Tibial artery (tissue), 4 donors: ENCODE measurements at regions of chr2 and their contacts with region 1.

Region 1: GRCh38 chr2:158006961-158007719 is 94.5 kb upstream of the UPP2 start:
- DNase-seq: no peak
- H3K4me3 ChIP-seq: no peak overlapping the region
- H3K27ac ChIP-seq: no peak overlapping the region
- H3K4me1 ChIP-seq: peaks cover 0 to 14% (median 3%) of the 10 kb centered on the region in 4 donors
- H3K27me3 ChIP-seq: no peaks in the 10 kb centered on the region
- CTCF ChIP-seq: no peak

Region 2: DNA sequence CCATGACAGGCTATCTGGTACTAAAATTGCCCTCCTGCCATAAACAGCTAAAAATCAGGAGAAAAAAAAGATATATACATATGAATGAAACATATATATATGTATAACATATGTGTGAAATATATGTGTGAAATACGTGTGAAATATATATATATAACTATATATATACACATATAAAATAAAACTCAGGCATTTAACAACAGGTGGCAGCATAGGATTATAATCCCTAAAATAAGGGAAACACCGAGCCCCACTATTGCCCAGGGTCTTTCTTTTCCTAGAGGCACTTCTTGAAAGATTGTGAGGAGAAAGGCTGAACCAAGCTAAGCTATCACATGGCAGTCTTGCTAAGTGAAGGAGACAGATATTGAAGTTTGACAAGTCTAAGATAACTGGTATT is 497.4 kb before region 1 on chr2:
- intact Hi-C with region 1: loop called (anchors 10 kb)
- DNase-seq: no peak
- H3K4me3 ChIP-seq: no peak overlapping the region
- H3K27ac ChIP-seq: no peak overlapping the region
- H3K4me1 ChIP-seq: no peaks in the 10 kb centered on the region
- H3K27me3 ChIP-seq: no peaks in the 10 kb centered on the region
- CTCF ChIP-seq: no peak

Region 3: GRCh38 chr2:157628477-157629415 is 378.4 kb before region 1 on chr2 and contains the start of gene ACVR1C:
- intact Hi-C with region 1: loop called (anchors 10 kb)
- DNase-seq: peak; percentile 31 to 70
- H3K4me3 ChIP-seq: peak within 1 kb of the TSS; percentile 55 to 64
- H3K27ac ChIP-seq: peak within 1 kb of the TSS in 1 of 2 donors; percentile 2
- H3K4me1 ChIP-seq: peaks cover 0 to 17% (median 10%) of the 10 kb centered on the region in 4 donors
- H3K27me3 ChIP-seq: peaks cover 0 to 6% of the 10 kb centered on the region in 2 donors
- CTCF ChIP-seq: peak; percentile 15 to 32

Region 4: DNA sequence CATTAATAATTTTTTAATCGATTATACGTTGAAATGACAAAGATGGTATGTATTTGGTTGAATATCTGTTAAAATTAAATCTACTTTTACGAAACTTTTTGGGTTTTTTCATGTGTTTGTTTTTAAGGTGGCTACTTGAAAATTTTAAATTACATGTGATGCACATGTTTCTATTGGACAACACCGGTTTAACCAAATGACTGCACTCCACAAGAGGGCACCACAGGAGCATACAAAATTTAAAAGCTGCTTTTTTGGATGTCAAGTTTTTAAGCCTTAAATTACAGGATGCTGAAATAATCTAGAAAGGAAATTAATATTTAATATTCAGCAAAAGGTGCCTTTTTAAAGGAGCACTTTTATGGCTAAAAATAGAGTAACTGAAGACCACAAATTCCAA is 229.7 kb before region 1 on chr2:
- intact Hi-C with region 1: loop called (anchors 5 kb)
- DNase-seq: no peak
- H3K4me3 ChIP-seq: no peak overlapping the region
- H3K27ac ChIP-seq: no peak overlapping the region
- H3K4me1 ChIP-seq: peaks cover 0 to 10% (median 4%) of the 10 kb centered on the region in 4 donors
- H3K27me3 ChIP-seq: no peaks in the 10 kb centered on the region
- CTCF ChIP-seq: peak; percentile 57 to 75

Region 5: GRCh38 chr2:157849591-157849990 is 157.5 kb before region 1 on chr2:
- intact Hi-C with region 1: no loop called
- DNase-seq: no peak
- H3K4me3 ChIP-seq: no peak overlapping the region
- H3K27ac ChIP-seq: no peak overlapping the region
- H3K4me1 ChIP-seq: peaks cover 0 to 15% (median 0%) of the 10 kb centered on the region in 4 donors
- H3K27me3 ChIP-seq: no peaks in the 10 kb centered on the region
- CTCF ChIP-seq: no peak